ENCODE measurements at regions of chr20 and their contacts with region 1.

Region 1: DNA sequence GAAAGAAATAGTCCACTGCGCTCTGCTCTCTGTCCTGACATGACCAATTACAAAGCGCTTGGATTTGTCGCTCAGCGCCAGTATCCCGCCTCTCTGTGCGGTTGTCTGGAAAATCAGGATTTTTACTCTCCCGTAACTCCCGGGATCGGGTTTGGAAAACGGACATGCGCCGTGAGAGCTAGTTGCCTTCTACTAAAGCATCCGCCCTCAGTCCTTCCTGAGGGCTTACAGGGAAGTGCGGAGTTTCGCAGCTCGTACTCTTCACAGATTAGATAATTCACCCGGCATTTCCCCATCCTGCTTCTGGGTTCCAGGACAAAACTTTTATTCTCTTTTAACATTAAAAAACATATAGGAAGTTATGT is 427 bp upstream of the MKKS start:
- DNase-seq: peak; percentile 94
- H3K4me3 ChIP-seq: peak overlapping the region; percentile 77 to 83
- H3K27ac ChIP-seq: peak overlapping the region; percentile 93
- H3K4me1 ChIP-seq: peaks cover 5% of the 10 kb centered on the region
- H3K27me3 ChIP-seq: no peaks in the 10 kb centered on the region
- CTCF ChIP-seq: no peak
- POLR2A ChIP-seq: peak; percentile 80

Region 2: GRCh38 chr20:10219452-10219791 is 215.0 kb before region 1 on chr20:
- intact Hi-C with region 1: loop called (anchors 5 kb)
- DNase-seq: peak; percentile 56
- H3K4me3 ChIP-seq: peak overlapping the region; percentile 23 to 29
- H3K27ac ChIP-seq: no peak overlapping the region
- H3K4me1 ChIP-seq: no peaks in the 10 kb centered on the region
- H3K27me3 ChIP-seq: no peaks in the 10 kb centered on the region
- CTCF ChIP-seq: no peak
- POLR2A ChIP-seq: no peak

Measured in prostate gland (tissue), 2 donors.